T-cell (primary cell): ENCODE measurements at regions of chr10 and their contacts with region 1.

Region 1: GRCh38 chr10:5583525-5584175 is 58.9 kb downstream of the CALML3 start:
- DNase-seq: no peak
- ATAC-seq: no peak
- H3K4me3 ChIP-seq: no peak overlapping the region
- H3K4me3 Mint-ChIP-seq: no peak overlapping the region
- H3K27ac ChIP-seq: no peak overlapping the region
- H3K27ac Mint-ChIP-seq: no peak overlapping the region
- H3K4me1 ChIP-seq: no peaks in the 10 kb centered on the region
- H3K4me1 Mint-ChIP-seq: no peaks in the 10 kb centered on the region
- H3K27me3 ChIP-seq: peaks cover 0 to 49% of the 10 kb centered on the region in 2 experiments
- H3K27me3 Mint-ChIP-seq: peaks cover 6 to 17% of the 10 kb centered on the region in 2 donors

Region 2: DNA sequence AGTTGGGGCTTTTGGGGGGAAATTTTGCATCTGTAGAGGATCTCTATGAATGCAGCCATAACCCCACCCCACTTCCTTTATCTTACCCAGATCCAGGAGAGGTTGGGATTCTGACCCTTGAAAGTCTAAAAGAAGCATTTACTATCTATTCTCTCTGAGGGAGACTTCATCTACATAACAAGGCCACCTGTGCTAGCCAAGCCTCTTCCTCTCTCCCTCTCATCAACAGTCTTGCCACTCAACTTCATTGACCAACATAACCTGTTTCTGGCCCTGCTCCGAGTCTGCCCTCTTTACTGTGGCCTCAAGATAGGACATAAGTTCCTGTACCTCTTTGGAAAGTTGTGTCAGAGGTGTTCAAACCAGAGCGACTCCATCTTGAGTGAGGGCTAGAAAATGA is 198.4 kb before region 1 on chr10:
- CTCF ChIA-PET with region 1: no interaction called
- POLR2A ChIA-PET with region 1: no interaction called
- DNase-seq: no peak
- ATAC-seq: no peak
- H3K4me3 ChIP-seq: no peak overlapping the region
- H3K4me3 Mint-ChIP-seq: no peak overlapping the region
- H3K27ac ChIP-seq: no peak overlapping the region
- H3K27ac Mint-ChIP-seq: no peak overlapping the region
- H3K4me1 ChIP-seq: no peaks in the 10 kb centered on the region
- H3K4me1 Mint-ChIP-seq: no peaks in the 10 kb centered on the region
- H3K27me3 ChIP-seq: no peaks in the 10 kb centered on the region
- H3K27me3 Mint-ChIP-seq: peaks cover 0 to 8% of the 10 kb centered on the region in 2 donors

Region 3: GRCh38 chr10:5534880-5535856 is 48.5 kb before region 1 on chr10:
- CTCF ChIA-PET with region 1: no interaction called
- POLR2A ChIA-PET with region 1: no interaction called
- DNase-seq: no peak
- ATAC-seq: no peak
- H3K4me3 ChIP-seq: no peak overlapping the region
- H3K4me3 Mint-ChIP-seq: no peak overlapping the region
- H3K27ac ChIP-seq: no peak overlapping the region
- H3K27ac Mint-ChIP-seq: no peak overlapping the region
- H3K4me1 ChIP-seq: no peaks in the 10 kb centered on the region
- H3K4me1 Mint-ChIP-seq: peaks cover 0 to 4% (median 0%) of the 10 kb centered on the region in 3 donors
- H3K27me3 ChIP-seq: no peaks in the 10 kb centered on the region
- H3K27me3 Mint-ChIP-seq: peaks cover 0 to 2% of the 10 kb centered on the region in 2 donors

Region 4: DNA sequence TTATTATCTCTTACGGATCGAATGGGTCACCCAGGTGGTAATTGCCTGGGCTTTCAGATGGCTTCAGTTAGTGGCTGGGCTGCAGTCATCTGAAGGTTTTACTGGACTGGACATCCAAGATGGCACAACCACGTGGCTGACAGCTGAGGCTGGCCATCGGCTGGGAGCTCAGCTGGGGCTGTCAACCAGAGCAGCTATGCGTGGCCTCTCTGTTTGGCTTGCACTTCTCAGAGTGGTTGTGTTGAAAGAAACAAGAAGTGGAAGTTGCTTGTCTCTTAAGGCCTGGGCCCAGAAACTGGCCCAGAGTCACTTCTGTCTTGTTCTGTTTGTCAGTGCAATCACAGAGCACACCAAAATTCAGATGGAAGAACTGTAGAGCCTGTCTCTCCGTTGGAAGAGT is 235.2 kb after region 1 on chr10:
- CTCF ChIA-PET with region 1: interaction called in 1 of 2 experiments, 10 read pairs
- POLR2A ChIA-PET with region 1: no interaction called
- DNase-seq: no peak
- ATAC-seq: no peak
- H3K4me3 ChIP-seq: no peak overlapping the region
- H3K4me3 Mint-ChIP-seq: no peak overlapping the region
- H3K27ac ChIP-seq: no peak overlapping the region
- H3K27ac Mint-ChIP-seq: no peak overlapping the region
- H3K4me1 ChIP-seq: peaks cover 11 to 16% of the 10 kb centered on the region in 2 experiments
- H3K4me1 Mint-ChIP-seq: peaks cover 21 to 34% (median 27%) of the 10 kb centered on the region in 3 donors
- H3K27me3 ChIP-seq: no peaks in the 10 kb centered on the region
- H3K27me3 Mint-ChIP-seq: no peaks in the 10 kb centered on the region